ENCODE measurements at regions of chr12 and their contacts with region 1.

Region 1: DNA sequence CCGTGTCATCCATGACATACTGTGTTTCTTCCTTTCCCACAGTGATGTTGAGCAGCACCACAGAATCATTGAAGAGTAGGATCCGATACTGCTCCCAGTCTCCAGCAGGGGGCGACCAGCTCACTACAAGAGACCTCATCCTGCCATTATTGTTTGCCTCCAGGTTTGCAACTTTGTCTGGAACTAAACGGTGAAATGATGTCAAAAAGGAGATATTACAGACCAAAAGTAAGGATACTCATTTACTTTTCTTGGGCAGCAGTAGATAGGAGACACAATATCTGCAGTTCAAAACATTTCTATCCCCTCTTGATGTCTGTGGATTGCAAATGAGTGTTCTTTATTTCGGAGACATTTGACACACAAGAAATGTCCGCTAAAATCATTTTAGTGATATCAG is 47.2 kb downstream of the PTPRB start:
- DNase-seq: peak; percentile 62
- ATAC-seq: peak; percentile 99
- H3K4me3 ChIP-seq: no peak overlapping the region
- H3K27ac ChIP-seq: no peak overlapping the region
- H3K4me1 ChIP-seq: no peaks in the 10 kb centered on the region
- H3K27me3 ChIP-seq: no peaks in the 10 kb centered on the region
- CTCF ChIP-seq: peak; percentile 72 to 90 (median 89)
- POLR2A ChIP-seq: no peak
- RAD21 ChIP-seq: peak; percentile 93

Region 2: GRCh38 chr12:70719672-70720420 is 129.8 kb after region 1 on chr12:
- CTCF ChIA-PET with region 1: interaction called, 11 read pairs
- POLR2A ChIA-PET with region 1: no interaction called
- RAD21 ChIA-PET with region 1: interaction called in 1 of 2 experiments, 4 read pairs
- intact Hi-C with region 1: loop called (anchors 1 kb)
- DNase-seq: no peak
- ATAC-seq: peak; percentile 84
- H3K4me3 ChIP-seq: no peak overlapping the region
- H3K27ac ChIP-seq: no peak overlapping the region
- H3K4me1 ChIP-seq: no peaks in the 10 kb centered on the region
- H3K27me3 ChIP-seq: no peaks in the 10 kb centered on the region
- CTCF ChIP-seq: peak; percentile 94 to 97 (median 96)
- POLR2A ChIP-seq: no peak
- RAD21 ChIP-seq: peak; percentile 94

Region 3: GRCh38 chr12:70812151-70812550 is 222.1 kb after region 1 on chr12:
- CTCF ChIA-PET with region 1: no interaction called
- POLR2A ChIA-PET with region 1: no interaction called
- RAD21 ChIA-PET with region 1: no interaction called
- intact Hi-C with region 1: no loop called
- DNase-seq: no peak
- ATAC-seq: no peak
- H3K4me3 ChIP-seq: no peak overlapping the region
- H3K27ac ChIP-seq: no peak overlapping the region
- H3K4me1 ChIP-seq: peaks cover 2 to 10% of the 10 kb centered on the region in 2 experiments; a peak in 2 of 4 replicates
- H3K27me3 ChIP-seq: no peaks in the 10 kb centered on the region
- CTCF ChIP-seq: no peak
- POLR2A ChIP-seq: no peak
- RAD21 ChIP-seq: no peak

Region 4: GRCh38 chr12:70849265-70849960 is 259.4 kb after region 1 on chr12:
- CTCF ChIA-PET with region 1: no interaction called
- POLR2A ChIA-PET with region 1: no interaction called
- RAD21 ChIA-PET with region 1: no interaction called
- intact Hi-C with region 1: loop called (anchors 10 kb)
- DNase-seq: peak; percentile 16
- ATAC-seq: peak; percentile 44; the same call in 1 of the 2 replicates
- H3K4me3 ChIP-seq: no peak overlapping the region
- H3K27ac ChIP-seq: no peak overlapping the region
- H3K4me1 ChIP-seq: no peaks in the 10 kb centered on the region
- H3K27me3 ChIP-seq: no peaks in the 10 kb centered on the region
- CTCF ChIP-seq: peak; percentile 27 to 70 (median 59); a peak in 4 of 6 replicates
- POLR2A ChIP-seq: no peak
- RAD21 ChIP-seq: peak; percentile 74

Region 5: DNA sequence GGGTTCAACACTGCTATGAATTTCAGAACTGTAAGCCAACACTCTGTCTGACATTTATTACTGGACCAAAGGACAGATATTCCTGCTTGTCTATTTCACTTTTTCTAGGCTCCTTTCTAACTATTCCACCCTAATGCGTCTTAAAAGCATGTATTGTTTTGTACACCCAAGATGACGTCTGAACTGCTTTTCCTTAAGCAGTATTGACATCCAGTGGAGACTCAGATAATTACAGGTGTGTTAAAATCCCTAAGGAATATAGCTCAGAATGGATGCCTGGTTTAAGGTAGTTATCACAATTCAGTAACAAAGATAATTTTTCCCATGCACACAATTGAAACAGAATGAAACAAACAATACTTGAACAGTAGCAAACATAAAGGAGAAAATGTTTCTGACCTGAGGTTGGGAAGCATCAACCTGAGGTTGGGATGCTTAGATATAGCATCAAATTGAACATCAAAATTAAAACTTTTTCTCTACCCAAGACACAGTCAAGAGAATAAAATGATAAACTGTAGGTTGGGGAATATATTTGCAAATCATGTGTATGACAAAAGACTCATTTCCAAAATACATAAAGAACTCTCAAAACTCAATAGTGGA is 424.2 kb after region 1 on chr12:
- CTCF ChIA-PET with region 1: no interaction called
- POLR2A ChIA-PET with region 1: no interaction called
- RAD21 ChIA-PET with region 1: no interaction called
- intact Hi-C with region 1: loop called (anchors 1 kb)
- DNase-seq: peak; percentile 51
- ATAC-seq: peak; percentile 83
- H3K4me3 ChIP-seq: no peak overlapping the region
- H3K27ac ChIP-seq: no peak overlapping the region
- H3K4me1 ChIP-seq: peaks cover 0 to 5% of the 10 kb centered on the region in 2 experiments; a peak in 1 of 4 replicates
- H3K27me3 ChIP-seq: no peaks in the 10 kb centered on the region
- CTCF ChIP-seq: peak; percentile 34 to 75 (median 68); a peak in 4 of 6 replicates
- POLR2A ChIP-seq: no peak
- RAD21 ChIP-seq: peak; percentile 90

Region 6: DNA sequence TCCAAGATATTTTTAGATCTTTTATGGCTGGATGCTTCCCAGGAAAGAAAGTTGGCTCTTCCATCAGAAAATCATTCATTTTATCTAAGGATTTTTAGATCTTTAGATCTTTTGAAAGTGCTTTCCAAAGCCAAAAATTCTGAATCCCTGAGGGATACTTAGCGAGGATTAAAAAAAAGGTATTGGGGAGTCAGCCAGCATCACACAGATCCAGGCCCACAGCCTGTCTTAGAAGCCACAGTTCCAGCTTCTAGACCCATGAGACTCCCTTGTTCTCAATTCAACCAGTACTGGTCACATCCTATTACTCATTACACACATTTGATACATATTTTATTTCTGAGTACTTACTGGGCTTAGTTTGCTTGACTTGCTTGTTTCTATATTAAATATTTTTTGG is 517.9 kb after region 1 on chr12:
- CTCF ChIA-PET with region 1: no interaction called
- POLR2A ChIA-PET with region 1: no interaction called
- RAD21 ChIA-PET with region 1: no interaction called
- intact Hi-C with region 1: no loop called
- DNase-seq: no peak
- ATAC-seq: no peak
- H3K4me3 ChIP-seq: no peak overlapping the region
- H3K27ac ChIP-seq: no peak overlapping the region
- H3K4me1 ChIP-seq: no peaks in the 10 kb centered on the region
- H3K27me3 ChIP-seq: no peaks in the 10 kb centered on the region
- CTCF ChIP-seq: no peak
- POLR2A ChIP-seq: no peak
- RAD21 ChIP-seq: no peak

Measured in HCT116 (cell line).